Head of caudate nucleus (tissue), 42 donors: ENCODE measurements at regions of chr1 and their contacts with region 1.

Region 1: DNA sequence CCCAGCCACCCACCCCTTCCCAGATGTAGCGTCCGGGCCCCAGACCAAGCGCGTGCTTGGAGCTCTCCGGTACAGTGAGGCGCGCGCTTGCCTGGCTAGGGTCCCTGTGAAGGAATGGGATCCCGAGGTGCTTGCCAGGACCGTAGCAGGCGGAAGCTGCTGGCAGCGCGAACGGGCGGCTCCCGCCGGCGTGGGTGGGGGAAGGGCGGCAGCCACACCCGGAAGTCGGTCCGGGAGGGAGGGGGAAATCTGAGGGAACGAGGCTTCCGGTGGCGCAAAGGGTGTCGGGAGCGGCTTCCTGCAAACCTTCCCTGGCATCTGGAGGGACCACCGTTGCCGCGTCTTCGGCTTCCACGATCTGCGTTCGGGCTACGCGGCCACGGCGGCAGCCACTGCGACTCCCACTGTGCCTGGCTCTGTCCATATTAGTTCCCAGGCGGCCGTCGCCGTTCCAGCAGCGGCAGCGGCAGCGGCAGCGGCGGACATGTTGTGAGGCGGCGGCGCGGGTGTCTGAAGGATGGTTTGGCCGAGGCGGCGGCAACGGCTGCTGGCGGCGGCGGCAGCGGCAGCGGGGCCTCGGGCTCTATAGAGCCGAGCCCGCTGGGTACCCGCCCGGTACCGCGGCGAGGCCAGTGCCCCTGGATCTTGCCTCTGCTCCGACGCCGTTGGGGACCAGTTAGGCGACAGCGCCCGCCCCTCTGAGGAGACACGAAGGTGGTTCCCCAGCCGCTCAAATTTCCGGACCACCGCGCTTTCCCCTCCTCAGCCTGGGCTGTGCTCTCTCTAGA is at the start of gene DR1:
- DNase-seq: peak; percentile 81 to 98 (median 95)

Region 2: DNA sequence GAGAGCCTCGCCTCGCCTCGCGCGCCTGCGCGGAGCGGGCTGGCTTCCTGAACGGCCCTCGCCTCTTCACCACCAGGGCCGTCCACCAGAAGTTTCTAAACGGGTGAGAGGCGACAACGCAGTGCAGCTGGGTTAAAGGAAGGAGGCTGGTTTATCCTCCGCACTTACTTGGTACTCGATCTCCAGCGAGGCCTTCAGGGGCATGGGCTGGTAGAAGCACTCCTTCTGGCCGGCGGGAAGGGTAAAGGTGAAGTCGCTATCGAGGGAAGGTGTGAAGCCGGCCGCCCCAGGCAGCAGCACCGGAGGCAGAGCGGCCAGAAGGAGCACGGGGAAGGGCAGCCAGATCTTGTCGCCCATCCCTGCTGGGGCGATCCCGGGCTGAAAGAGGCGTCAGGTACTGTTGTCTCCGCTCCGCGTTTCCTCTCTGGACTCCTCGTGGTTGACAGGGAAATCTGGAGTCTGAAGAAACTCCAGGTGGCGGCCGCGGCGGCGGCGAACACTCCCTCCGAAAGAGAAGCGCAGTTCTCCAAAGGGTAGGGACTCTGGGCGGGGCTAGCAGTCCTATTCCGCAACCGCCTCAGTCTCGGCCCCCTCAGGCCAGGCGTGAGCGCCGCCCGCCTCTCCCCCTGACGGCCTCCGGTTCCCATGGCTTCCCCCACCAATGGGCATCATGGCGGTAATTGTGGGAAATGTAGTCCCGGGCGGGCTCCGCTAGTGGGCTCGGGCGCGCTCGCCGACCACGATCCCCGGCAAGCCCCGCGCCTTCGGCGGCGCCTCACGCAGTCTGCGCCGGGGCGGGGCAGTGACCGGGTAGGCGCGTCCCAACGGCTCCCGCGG is 165.7 kb before region 1 on chr1 and contains the start of gene TMED5:
- intact Hi-C with region 1: loop called (anchors 5 kb)
- DNase-seq: peak; percentile 90 to 99 (median 98)

Region 3: GRCh38 chr1:93304716-93305138 is 41.1 kb before region 1 on chr1:
- intact Hi-C with region 1: no loop called
- DNase-seq: peak in 31 of 42 donors; percentile 17 to 86 (median 49)